ENCODE measurements at regions of chr11 and their contacts with region 1.

Region 1: DNA sequence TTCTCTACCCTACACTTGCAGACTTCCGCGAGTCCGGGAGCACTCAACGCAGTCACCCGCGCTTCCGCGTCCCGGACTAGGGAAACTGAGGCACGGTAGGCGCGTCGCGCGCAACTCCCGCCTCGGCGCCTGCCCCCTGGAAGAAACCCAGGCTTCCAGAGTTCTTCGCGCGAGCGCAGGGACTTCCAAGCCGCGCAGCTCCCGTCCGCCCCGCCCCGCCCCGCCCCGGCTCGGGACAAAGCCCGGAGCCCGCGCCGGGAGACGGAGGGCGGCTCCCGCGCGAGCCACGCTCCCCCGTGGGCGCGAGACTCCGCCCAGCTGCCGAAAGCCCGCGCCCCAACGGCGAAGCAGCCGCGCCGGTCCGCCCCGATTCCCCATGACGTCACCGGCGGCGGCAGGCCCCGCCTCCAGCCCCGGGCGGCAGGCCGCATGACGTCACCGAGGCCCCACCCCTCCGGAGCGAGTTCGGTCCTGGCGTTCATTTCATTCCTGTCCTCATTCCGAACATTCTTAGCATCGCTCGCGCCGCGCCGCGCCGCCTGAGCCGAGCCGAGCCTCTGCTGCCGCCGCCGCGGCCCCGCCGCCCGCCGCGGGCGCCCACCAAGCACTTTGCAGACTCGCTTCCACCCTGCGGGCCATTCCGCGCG is at the start of gene TEAD1:
- DNase-seq: peak; percentile 95
- H3K4me3 ChIP-seq: peak within 1 kb of the TSS; percentile 85 to 94 (median 89)
- H3K27ac ChIP-seq: peak within 1 kb of the TSS; percentile 71
- H3K4me1 ChIP-seq: peaks cover 22% of the 10 kb centered on the region
- H3K27me3 ChIP-seq: no peaks in the 10 kb centered on the region
- CTCF ChIP-seq: no peak
- POLR2A ChIP-seq: peak; percentile 87
- total RNA-seq, gene TEAD1: 43.2 and 49.0 TPM in 2 replicates

Region 2: DNA sequence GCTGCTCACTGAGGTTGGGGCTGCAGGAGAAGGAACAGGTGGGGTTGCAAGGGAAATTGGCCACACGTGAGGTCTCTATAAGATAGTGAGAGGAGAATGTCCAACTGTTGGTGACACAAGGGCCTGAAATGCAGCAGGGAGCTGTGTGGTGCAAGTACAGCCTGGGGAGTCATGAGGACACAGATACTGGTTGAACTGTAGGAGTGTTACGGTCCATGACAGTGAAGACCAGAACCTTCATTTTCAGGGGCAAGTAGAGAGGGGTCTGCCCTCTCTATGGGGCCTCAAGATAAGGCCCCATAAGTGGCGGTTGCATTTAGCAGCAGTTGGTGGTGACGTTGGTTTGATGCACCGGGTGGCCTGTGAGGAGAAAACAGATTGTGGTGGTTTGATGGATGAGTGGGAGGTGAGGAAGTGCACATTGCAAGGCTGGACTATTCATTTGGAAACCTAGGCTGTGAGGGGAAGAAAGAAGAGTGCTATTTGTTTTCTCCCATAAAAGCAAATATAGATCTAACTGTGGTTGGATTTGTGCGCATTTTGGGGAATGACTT is 524.3 kb before region 1 on chr11:
- CTCF ChIA-PET with region 1: no interaction called
- POLR2A ChIA-PET with region 1: no interaction called
- dilution Hi-C with region 1: no loop called
- intact Hi-C with region 1: no loop called
- DNase-seq: no peak
- H3K4me3 ChIP-seq: no peak overlapping the region
- H3K27ac ChIP-seq: no peak overlapping the region
- H3K4me1 ChIP-seq: no peaks in the 10 kb centered on the region
- H3K27me3 ChIP-seq: no peaks in the 10 kb centered on the region
- CTCF ChIP-seq: no peak
- POLR2A ChIP-seq: no peak

Region 3: GRCh38 chr11:12377824-12378593 is 296.0 kb before region 1 on chr11:
- CTCF ChIA-PET with region 1: no interaction called
- POLR2A ChIA-PET with region 1: no interaction called
- dilution Hi-C with region 1: no loop called
- intact Hi-C with region 1: loop called (anchors 5 kb)
- DNase-seq: peak; percentile 69
- H3K4me3 ChIP-seq: peak overlapping the region; percentile 72 to 82 (median 78)
- H3K27ac ChIP-seq: peak overlapping the region; percentile 95
- H3K4me1 ChIP-seq: peaks cover 16% of the 10 kb centered on the region
- H3K27me3 ChIP-seq: no peaks in the 10 kb centered on the region
- CTCF ChIP-seq: peak; percentile 12 to 23
- POLR2A ChIP-seq: no peak

Region 4: GRCh38 chr11:12539572-12539971 is 134.5 kb before region 1 on chr11:
- CTCF ChIA-PET with region 1: interaction called, 4 read pairs
- POLR2A ChIA-PET with region 1: no interaction called
- dilution Hi-C with region 1: no loop called
- intact Hi-C with region 1: loop called (anchors 5 kb)
- DNase-seq: peak; percentile 78
- H3K4me3 ChIP-seq: no peak overlapping the region
- H3K27ac ChIP-seq: peak overlapping the region; percentile 70
- H3K4me1 ChIP-seq: peaks cover 11% of the 10 kb centered on the region
- H3K27me3 ChIP-seq: no peaks in the 10 kb centered on the region
- CTCF ChIP-seq: no peak
- POLR2A ChIP-seq: peak; percentile 42

Region 5: GRCh38 chr11:12693479-12694181 is 19.6 kb after region 1 on chr11:
- CTCF ChIA-PET with region 1: interaction called, 8 read pairs
- POLR2A ChIA-PET with region 1: interaction called, 3 read pairs
- dilution Hi-C with region 1: no loop called
- intact Hi-C with region 1: loop called (anchors 1 kb)
- DNase-seq: peak; percentile 99
- H3K4me3 ChIP-seq: peak overlapping the region in 1 of 3 experiments; percentile 28
- H3K27ac ChIP-seq: peak overlapping the region; percentile 95
- H3K4me1 ChIP-seq: peaks cover 54% of the 10 kb centered on the region
- H3K27me3 ChIP-seq: no peaks in the 10 kb centered on the region
- CTCF ChIP-seq: no peak
- POLR2A ChIP-seq: peak; percentile 28

Region 6: GRCh38 chr11:12761029-12761428 is 87.0 kb after region 1 on chr11:
- CTCF ChIA-PET with region 1: interaction called, 7 read pairs
- POLR2A ChIA-PET with region 1: interaction called, 5 read pairs
- dilution Hi-C with region 1: no loop called
- intact Hi-C with region 1: loop called (anchors 2 kb)
- DNase-seq: peak; percentile 65
- H3K4me3 ChIP-seq: no peak overlapping the region
- H3K27ac ChIP-seq: peak overlapping the region; percentile 10
- H3K4me1 ChIP-seq: peaks cover 11% of the 10 kb centered on the region
- H3K27me3 ChIP-seq: no peaks in the 10 kb centered on the region
- CTCF ChIP-seq: peak; percentile 40 to 45
- POLR2A ChIP-seq: no peak

Region 7: DNA sequence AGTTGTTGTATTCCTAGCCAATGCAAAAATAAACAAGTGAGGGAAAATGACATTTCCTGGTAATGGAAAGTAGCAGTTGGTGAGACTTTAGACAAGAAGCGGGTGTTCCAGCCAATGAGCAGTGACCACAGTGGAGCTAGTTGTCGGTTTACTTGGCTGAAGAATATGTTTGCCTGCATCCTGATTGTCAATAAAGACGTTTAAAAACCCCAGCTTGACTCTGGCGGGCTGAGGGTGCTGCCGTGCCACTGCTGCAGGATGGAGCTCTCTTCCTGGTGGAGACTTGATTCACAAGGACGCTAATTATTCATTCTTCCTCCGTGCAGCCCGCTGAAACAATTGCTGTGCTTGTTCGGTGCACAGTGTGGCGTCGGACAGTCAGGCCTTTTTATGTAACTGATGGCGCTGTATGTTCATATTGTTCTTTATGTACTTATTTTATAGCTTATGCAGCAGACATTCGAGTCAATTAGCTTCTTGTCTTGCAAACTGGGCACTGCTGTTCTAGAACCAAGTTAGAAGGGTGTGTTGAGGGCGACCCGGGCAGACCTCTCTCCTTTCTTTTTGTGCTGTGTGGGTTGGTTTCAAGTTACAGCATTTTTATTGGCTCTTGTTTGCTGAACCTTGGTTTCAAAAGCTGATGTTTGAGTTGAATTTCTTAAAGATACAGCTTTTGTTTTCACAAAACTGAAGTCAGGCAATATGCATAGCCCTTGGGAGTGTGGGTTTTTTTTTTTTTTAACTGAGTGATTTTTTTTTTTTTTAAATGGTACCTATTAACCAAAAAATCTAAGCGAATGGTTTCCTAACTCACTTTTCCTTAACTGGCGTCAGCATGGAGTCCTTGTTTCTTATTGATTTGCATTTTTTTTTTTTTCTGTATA is 154.1 kb after region 1 on chr11:
- CTCF ChIA-PET with region 1: interaction called, 3 read pairs
- POLR2A ChIA-PET with region 1: interaction called, 3 read pairs
- dilution Hi-C with region 1: no loop called
- intact Hi-C with region 1: loop called (anchors 1 kb)
- DNase-seq: peak; percentile 91
- H3K4me3 ChIP-seq: peak overlapping the region; percentile 24 to 84 (median 63)
- H3K27ac ChIP-seq: peak overlapping the region; percentile 52
- H3K4me1 ChIP-seq: peaks cover 43% of the 10 kb centered on the region
- H3K27me3 ChIP-seq: no peaks in the 10 kb centered on the region
- CTCF ChIP-seq: no peak
- POLR2A ChIP-seq: peak; percentile 73

Region 8: GRCh38 chr11:12864316-12865156 is 190.5 kb after region 1 on chr11:
- CTCF ChIA-PET with region 1: no interaction called
- POLR2A ChIA-PET with region 1: no interaction called
- dilution Hi-C with region 1: no loop called
- intact Hi-C with region 1: loop called (anchors 1 kb)
- DNase-seq: peak; percentile 97
- H3K4me3 ChIP-seq: no peak overlapping the region
- H3K27ac ChIP-seq: peak overlapping the region; percentile 32
- H3K4me1 ChIP-seq: peaks cover 7% of the 10 kb centered on the region
- H3K27me3 ChIP-seq: no peaks in the 10 kb centered on the region
- CTCF ChIP-seq: no peak
- POLR2A ChIP-seq: no peak

Measured in endothelial cell of umbilical vein (primary cell).